Activated CD4-positive, alpha-beta T cell treated with anti-CD3 and anti-CD28 coated beads for 36 hours (primary cell): ENCODE measurements at regions of chr14 and their contacts with region 1.

Region 1: DNA sequence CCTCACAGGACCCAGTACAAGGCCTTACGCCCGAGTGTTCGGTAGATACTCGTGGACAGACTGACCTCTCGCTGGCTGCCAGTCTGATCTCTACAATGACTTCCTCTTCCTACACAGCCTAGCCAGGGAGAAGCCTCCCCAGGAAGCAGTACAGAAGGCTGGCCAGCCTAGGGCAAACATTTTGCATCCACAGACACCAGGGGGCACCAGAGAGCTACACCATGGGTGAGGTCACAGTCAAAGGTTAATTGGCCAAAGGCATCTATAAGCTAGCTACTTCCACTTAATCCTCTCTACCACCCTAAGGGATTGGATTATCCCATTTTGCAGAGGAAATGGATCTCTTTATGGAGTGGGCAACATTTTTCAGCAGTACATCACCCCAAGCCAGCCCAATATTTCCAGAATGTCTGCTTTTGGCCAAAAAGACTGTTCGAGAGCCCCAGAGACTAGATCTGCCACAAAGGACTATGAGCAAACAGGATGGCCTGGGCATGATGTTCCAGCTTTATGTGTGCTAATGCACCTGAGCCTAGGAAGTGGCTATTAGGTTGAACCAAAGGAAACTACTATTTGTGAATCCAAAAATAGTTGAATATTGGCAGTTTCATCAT is 14.6 kb upstream of the PNMA1 start:
- DNase-seq: peak; percentile 93
- ATAC-seq: peak; percentile 90
- H3K4me3 Mint-ChIP-seq: no peak overlapping the region
- H3K27ac Mint-ChIP-seq: peak overlapping the region; percentile 64
- H3K4me1 Mint-ChIP-seq: peaks cover 38% of the 10 kb centered on the region
- H3K27me3 Mint-ChIP-seq: no peaks in the 10 kb centered on the region

Region 2: DNA sequence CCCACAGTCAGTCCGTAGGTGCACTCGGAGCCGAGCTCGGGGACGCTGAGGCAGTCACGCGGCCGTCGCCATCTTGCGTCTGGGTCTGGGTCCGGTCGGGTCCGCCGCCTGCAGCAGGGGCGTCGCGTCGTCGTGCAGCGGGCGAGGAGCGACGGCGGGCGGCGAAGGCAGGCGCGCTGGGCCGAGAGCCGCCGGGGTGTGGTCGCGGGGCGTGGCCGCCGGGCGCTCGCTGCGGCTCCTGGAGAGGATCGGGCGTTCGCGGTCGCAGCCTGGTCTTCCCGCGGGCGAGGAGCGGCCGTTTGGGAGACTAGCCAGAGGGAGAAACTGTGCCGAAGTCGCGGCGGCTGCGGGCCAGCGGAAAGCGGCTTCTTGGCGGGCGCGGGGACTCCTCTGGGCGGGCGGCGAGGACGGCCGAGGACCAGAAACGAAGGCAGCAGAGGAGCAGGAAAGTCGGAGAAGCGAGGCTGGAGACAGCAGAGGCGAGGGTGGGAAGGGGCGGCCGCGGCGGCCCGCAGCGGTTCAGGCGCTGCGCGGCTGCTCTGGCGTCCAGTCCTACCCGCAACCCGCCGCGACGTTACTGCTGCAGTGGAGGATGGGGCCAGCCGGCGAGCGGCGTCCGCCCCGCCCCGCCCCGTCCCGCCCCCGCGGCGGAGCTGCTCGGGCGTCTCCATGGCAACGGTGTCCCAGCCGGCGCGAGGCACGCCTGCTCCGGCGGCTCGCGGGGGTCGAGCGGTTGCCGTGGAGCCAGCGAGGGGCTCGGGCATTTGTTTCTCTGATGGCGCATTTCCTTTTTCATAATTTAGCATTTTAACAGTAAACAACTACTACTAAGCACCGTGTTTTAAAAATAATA is 14.8 kb before region 1 on chr14 and contains the start of gene PNMA1:
- CTCF ChIA-PET with region 1: interaction called, 12 read pairs
- POLR2A ChIA-PET with region 1: no interaction called
- intact Hi-C with region 1: no loop called
- DNase-seq: peak; percentile 92
- ATAC-seq: peak; percentile 79
- H3K4me3 Mint-ChIP-seq: peak within 1 kb of the TSS; percentile 98
- H3K27ac Mint-ChIP-seq: peak within 1 kb of the TSS; percentile 94
- H3K4me1 Mint-ChIP-seq: peaks cover 13% of the 10 kb centered on the region
- H3K27me3 Mint-ChIP-seq: no peaks in the 10 kb centered on the region
- total RNA-seq, gene PNMA1: 23.2 to 28.8 TPM

Region 3: GRCh38 chr14:73753959-73754882 is 25.4 kb after region 1 on chr14:
- CTCF ChIA-PET with region 1: interaction called, 90 read pairs
- POLR2A ChIA-PET with region 1: interaction called, 8 read pairs
- intact Hi-C with region 1: loop called (anchors 1 to 2 kb)
- DNase-seq: peak; percentile 80
- ATAC-seq: peak; percentile 45
- H3K4me3 Mint-ChIP-seq: peak overlapping the region; percentile 84
- H3K27ac Mint-ChIP-seq: peak overlapping the region; percentile 94
- H3K4me1 Mint-ChIP-seq: peaks cover 87% of the 10 kb centered on the region
- H3K27me3 Mint-ChIP-seq: no peaks in the 10 kb centered on the region

Region 4: GRCh38 chr14:73851644-73852382 is 123.0 kb after region 1 on chr14 and contains the start of gene PTGR2:
- CTCF ChIA-PET with region 1: interaction called, 12 read pairs
- POLR2A ChIA-PET with region 1: interaction called, 4 read pairs
- intact Hi-C with region 1: no loop called
- DNase-seq: peak; percentile 94
- ATAC-seq: peak; percentile 94
- H3K4me3 Mint-ChIP-seq: peak within 1 kb of the TSS; percentile 98
- H3K27ac Mint-ChIP-seq: peak within 1 kb of the TSS; percentile 100
- H3K4me1 Mint-ChIP-seq: peaks cover 24% of the 10 kb centered on the region
- H3K27me3 Mint-ChIP-seq: no peaks in the 10 kb centered on the region
- total RNA-seq, gene PTGR2: 12.6 to 14.3 TPM

Region 5: GRCh38 chr14:74038015-74038859 is 309.4 kb after region 1 on chr14:
- CTCF ChIA-PET with region 1: interaction called, 3 read pairs
- POLR2A ChIA-PET with region 1: no interaction called
- intact Hi-C with region 1: loop called in 1 of 2 experiments (anchors 1 kb)
- DNase-seq: no peak
- ATAC-seq: peak; percentile 51
- H3K4me3 Mint-ChIP-seq: no peak overlapping the region
- H3K27ac Mint-ChIP-seq: no peak overlapping the region
- H3K4me1 Mint-ChIP-seq: no peaks in the 10 kb centered on the region
- H3K27me3 Mint-ChIP-seq: no peaks in the 10 kb centered on the region